ENCODE measurements at regions of chr10 and their contacts with region 1.

Region 1: GRCh38 chr10:48656241-48656913 is 28.3 kb upstream of the WDFY4 start:
- DNase-seq: peak; percentile 97
- ATAC-seq: peak; percentile 81
- H3K4me3 ChIP-seq: peak overlapping the region; percentile 75
- H3K27ac ChIP-seq: no peak overlapping the region
- H3K4me1 ChIP-seq: peaks cover 14% of the 10 kb centered on the region
- H3K27me3 ChIP-seq: no peaks in the 10 kb centered on the region; the same call in 1 of the 2 replicates
- CTCF ChIP-seq: peak; percentile 100

Region 2: DNA sequence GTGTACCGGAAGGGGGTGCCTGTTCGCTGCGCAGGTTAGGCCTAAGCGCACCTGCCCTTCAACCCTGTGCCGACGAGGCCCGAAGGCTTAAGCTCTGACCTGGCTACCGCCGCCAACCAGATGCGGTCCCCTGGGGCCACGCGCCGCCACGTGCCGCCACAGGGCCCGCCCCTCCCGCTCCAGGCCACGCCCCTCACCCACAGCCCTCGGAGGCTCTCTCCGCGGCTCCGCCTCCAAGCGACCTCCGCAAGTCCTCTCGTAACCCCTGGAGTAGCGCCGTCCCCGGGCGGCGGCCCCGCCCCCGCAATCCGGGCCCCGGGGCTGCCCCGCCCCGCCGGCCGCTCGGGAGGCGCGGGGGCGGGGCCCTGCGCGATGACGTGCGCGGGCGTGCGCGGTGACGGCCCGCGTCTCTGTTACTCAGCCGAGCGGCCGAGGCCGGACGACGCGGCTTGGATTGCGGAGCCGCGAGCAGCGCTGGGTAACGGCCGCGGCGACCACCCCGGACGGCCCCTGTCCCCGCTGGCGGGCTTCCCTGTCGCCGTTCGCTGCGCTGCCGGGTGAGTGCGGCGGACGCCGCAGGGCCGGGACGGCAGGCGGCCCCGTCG is 350.0 kb before region 1 on chr10 and contains the start of gene MAPK8:
- CTCF ChIA-PET with region 1: no interaction called
- POLR2A ChIA-PET with region 1: interaction called, 9 read pairs
- intact Hi-C with region 1: loop called (anchors 5 kb)
- DNase-seq: peak; percentile 86
- ATAC-seq: peak; percentile 88
- H3K4me3 ChIP-seq: peak within 1 kb of the TSS; percentile 95
- H3K27ac ChIP-seq: no peak within 1 kb of the TSS
- H3K4me1 ChIP-seq: peaks cover 28% of the 10 kb centered on the region
- H3K27me3 ChIP-seq: no peaks in the 10 kb centered on the region
- CTCF ChIP-seq: no peak
- total RNA-seq, gene MAPK8: 21.5 and 26.6 TPM in 2 replicates

Region 3: GRCh38 chr10:48506147-48506917 is 150.0 kb before region 1 on chr10:
- CTCF ChIA-PET with region 1: interaction called, 8 read pairs
- POLR2A ChIA-PET with region 1: no interaction called
- intact Hi-C with region 1: loop called (anchors 5 kb)
- DNase-seq: peak; percentile 83
- ATAC-seq: peak; percentile 89
- H3K4me3 ChIP-seq: no peak overlapping the region
- H3K27ac ChIP-seq: no peak overlapping the region
- H3K4me1 ChIP-seq: peaks cover 9% of the 10 kb centered on the region; the same call in 1 of the 2 replicates
- H3K27me3 ChIP-seq: no peaks in the 10 kb centered on the region
- CTCF ChIP-seq: peak; percentile 97

Region 4: DNA sequence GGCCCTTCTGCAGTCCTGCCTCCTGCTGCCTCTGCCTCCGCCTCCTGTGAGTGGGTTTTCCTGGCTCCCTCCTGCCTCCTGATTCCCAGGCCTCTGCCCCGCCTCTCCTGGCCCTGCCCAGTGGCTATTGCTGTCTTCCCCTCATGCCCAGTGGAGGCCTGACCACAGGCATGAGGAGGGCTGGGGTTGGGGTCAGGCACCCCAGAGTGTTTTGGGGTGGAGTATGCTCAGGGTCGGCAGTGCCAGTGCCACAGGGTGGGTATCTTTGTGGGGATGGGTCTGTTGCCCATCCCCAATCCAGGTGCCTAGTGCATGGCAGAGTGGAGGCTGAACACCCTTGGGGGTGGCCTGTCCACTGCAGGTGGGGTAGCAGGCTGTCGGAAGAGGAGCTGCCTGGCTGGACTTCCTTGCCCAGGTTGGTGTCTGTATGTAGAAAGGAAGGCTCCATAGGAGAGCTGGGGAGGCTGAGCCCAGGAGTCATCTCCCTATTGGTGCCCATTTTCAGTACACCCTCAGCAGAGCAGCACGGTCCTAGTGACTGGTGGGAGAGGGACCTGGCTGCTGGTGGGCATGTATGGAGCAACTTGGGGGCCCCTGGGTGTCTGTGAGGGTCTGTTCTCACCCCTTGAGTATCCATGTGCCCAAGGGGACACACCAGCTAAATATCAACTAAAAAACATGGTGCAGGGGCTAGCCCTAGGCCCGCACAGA is 113.8 kb before region 1 on chr10:
- CTCF ChIA-PET with region 1: interaction called, 15 read pairs
- POLR2A ChIA-PET with region 1: no interaction called
- intact Hi-C with region 1: no loop called
- DNase-seq: no peak
- ATAC-seq: no peak
- H3K4me3 ChIP-seq: no peak overlapping the region
- H3K27ac ChIP-seq: no peak overlapping the region
- H3K4me1 ChIP-seq: no peaks in the 10 kb centered on the region
- H3K27me3 ChIP-seq: no peaks in the 10 kb centered on the region
- CTCF ChIP-seq: no peak

Region 5: DNA sequence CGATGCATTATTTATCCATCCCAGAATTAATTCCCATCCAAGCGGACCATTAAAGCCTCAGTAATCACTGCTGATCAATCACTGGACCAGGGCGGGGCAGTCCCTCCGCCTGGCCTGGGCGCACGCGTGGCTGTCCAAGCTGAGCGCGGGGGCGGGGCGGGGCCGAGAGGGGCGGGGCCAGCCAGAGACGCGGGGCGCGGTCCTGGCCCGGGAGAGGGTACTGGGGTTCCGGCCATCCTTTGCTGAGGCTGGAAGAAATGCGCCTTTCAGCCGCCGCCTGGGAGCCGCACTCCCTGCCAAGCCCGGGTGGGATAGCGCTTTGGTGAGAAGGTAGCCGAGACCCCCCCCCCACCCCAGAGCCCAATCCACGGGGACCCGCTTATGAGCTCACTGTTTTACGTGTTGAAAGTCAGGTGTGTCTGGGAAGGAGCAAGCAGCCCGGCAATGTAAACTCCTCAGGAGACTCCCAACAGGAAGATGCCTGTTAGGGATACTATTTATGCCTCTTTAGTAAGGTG is 51.3 kb before region 1 on chr10 and contains the start of gene ARHGAP22:
- CTCF ChIA-PET with region 1: interaction called, 60 read pairs
- POLR2A ChIA-PET with region 1: interaction called, 7 read pairs
- intact Hi-C with region 1: loop called (anchors 2 kb)
- DNase-seq: peak; percentile 63
- ATAC-seq: peak; percentile 76
- H3K4me3 ChIP-seq: peak within 1 kb of the TSS; percentile 88
- H3K27ac ChIP-seq: peak within 1 kb of the TSS; percentile 67
- H3K4me1 ChIP-seq: peaks cover 60% of the 10 kb centered on the region
- H3K27me3 ChIP-seq: no peaks in the 10 kb centered on the region
- CTCF ChIP-seq: no peak
- total RNA-seq, gene ARHGAP22: 12.2 and 14.9 TPM in 2 replicates

Region 6: DNA sequence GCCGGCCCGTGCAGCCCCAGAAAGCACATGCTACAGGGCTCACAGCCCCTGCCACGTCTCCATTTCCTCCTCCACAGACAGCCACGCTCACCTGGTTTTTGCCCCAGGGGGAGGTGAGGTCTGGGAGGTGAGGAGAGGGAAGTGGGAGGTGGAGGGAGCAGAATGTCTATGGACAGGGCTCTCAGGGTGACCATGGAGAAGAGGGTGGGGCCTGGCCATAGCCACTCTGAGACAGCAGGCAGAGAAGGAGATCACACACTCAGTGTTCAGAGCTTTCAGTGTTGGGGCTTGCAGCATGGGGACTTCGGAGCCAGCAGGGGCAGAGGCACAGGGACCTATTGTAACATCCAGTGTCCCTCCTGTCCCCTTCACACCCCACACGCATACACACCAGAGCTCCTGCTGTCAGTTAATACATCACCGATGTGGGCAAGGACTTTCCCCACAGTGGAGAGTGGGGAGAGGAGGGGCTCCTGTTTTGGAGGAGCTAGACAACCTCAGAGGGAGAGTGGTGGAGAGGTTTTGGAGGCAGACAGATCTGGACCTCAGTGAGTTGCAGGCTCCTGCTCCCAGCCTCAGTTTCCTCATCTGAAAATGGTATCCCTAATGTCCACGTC is 42.7 kb after region 1 on chr10:
- CTCF ChIA-PET with region 1: no interaction called
- POLR2A ChIA-PET with region 1: no interaction called
- intact Hi-C with region 1: no loop called
- DNase-seq: no peak
- ATAC-seq: no peak
- H3K4me3 ChIP-seq: no peak overlapping the region
- H3K27ac ChIP-seq: no peak overlapping the region
- H3K4me1 ChIP-seq: no peaks in the 10 kb centered on the region
- H3K27me3 ChIP-seq: peaks cover 94% of the 10 kb centered on the region
- CTCF ChIP-seq: no peak

Region 7: GRCh38 chr10:48725686-48726085 is 69.3 kb after region 1 on chr10:
- CTCF ChIA-PET with region 1: interaction called, 10 read pairs
- POLR2A ChIA-PET with region 1: no interaction called
- intact Hi-C with region 1: no loop called
- DNase-seq: peak; percentile 44
- ATAC-seq: no peak
- H3K4me3 ChIP-seq: no peak overlapping the region
- H3K27ac ChIP-seq: no peak overlapping the region
- H3K4me1 ChIP-seq: no peaks in the 10 kb centered on the region
- H3K27me3 ChIP-seq: peaks cover 78% of the 10 kb centered on the region
- CTCF ChIP-seq: no peak

Region 8: GRCh38 chr10:48845512-48845911 is 189.1 kb after region 1 on chr10:
- CTCF ChIA-PET with region 1: no interaction called
- POLR2A ChIA-PET with region 1: no interaction called
- intact Hi-C with region 1: no loop called
- DNase-seq: no peak
- ATAC-seq: no peak
- H3K4me3 ChIP-seq: no peak overlapping the region
- H3K27ac ChIP-seq: no peak overlapping the region
- H3K4me1 ChIP-seq: no peaks in the 10 kb centered on the region
- H3K27me3 ChIP-seq: peaks cover 98% of the 10 kb centered on the region
- CTCF ChIP-seq: no peak

Region 9: GRCh38 chr10:49407552-49408137 is 751.3 kb after region 1 on chr10:
- CTCF ChIA-PET with region 1: interaction called, 9 read pairs
- POLR2A ChIA-PET with region 1: no interaction called
- intact Hi-C with region 1: loop called (anchors 5 kb)
- DNase-seq: peak; percentile 99
- ATAC-seq: peak; percentile 94
- H3K4me3 ChIP-seq: no peak overlapping the region
- H3K27ac ChIP-seq: no peak overlapping the region
- H3K4me1 ChIP-seq: no peaks in the 10 kb centered on the region
- H3K27me3 ChIP-seq: peaks cover 54% of the 10 kb centered on the region
- CTCF ChIP-seq: peak; percentile 100

Measured in PC-3 (cell line).